Activated CD4-positive, alpha-beta memory T cell treated with anti-CD3 and anti-CD28 coated beads for 36 hours (primary cell): ENCODE measurements at regions of chr1 and their contacts with region 1.

Region 1: DNA sequence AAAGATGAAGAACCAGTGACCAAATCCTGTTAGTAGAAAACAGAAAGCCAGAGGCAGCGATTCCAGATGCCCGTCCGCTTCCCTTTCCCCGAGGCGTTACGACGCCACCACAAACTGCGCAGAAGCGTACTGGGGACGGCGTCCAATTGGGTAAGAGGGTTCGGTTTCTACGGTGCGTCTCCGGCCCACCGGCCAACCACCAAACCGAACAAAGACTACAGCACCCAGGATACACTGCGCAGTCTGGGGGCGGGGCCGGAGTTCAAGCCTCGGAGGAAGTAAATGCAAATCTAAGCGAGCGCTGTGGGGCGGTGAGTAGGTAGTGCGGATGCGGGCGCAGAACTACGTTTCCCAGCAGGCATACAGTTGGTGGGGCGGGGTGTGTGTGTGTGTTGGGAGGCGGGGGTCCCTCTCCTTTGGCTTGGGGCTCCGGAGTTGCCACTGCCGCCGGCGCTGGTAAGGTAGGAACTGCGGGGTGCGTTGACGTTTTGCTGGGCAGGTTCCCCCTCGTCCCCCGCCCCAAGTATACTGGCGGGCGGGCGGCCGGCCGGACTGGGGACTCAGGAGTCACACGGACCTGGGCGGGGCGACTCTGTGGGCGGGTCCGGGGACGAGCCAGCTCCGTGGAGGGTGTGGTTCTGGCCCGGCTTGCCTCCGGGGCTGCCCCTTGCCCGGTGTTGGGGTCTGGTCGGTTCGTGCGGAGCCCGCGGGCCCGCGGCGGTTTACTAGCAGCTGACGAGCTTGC is at the starts of genes SWT1 and TRMT1L:
- DNase-seq: peak; percentile 99
- H3K4me3 Mint-ChIP-seq: peak within 1 kb of the TSS; percentile 86
- H3K27ac Mint-ChIP-seq: peak within 1 kb of the TSS; percentile 90
- H3K4me1 Mint-ChIP-seq: peaks cover 53% of the 10 kb centered on the region
- H3K27me3 Mint-ChIP-seq: no peaks in the 10 kb centered on the region
- total RNA-seq, gene SWT1: 2.3 to 3.0 TPM
- total RNA-seq, gene TRMT1L: 28.6 to 34.4 TPM

Region 2: DNA sequence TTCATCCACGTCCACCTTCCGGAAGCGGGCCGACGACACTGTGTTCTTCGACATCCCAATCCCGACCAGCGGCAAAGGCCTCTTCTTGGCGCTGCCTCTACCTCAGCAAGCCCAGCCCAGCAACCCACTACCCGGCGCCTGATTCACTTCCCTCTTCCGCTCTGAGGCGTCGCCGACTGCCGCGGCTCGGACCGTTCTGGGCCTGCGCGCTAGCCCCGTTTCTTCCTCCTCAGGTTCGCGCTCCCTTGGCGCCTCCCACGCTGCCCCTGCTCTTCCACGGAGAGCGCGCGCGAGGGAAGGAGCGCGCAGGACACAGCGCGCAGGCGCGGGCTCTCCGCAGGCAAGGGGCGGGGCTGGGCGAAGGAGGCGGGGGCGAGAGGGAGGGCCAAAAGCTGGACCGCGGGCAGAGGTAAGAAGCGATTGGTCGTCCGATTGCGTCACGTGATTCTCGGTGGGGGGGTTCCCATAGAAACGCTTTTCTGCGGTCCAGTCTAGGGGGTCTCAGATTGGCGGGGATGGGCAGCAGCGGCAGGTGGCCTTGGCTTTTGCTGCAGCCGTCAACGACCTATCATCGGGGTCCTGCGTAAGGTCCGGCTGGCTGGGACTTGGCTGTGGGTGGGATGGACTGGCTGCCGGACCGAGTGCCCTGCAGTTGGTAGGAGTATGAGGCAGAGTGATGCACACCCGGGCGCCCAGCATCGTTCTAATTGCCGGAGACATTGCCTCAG is 1521.3 kb before region 1 on chr1 and contains the start of gene ARPC5:
- CTCF ChIA-PET with region 1: no interaction called
- POLR2A ChIA-PET with region 1: no interaction called
- intact Hi-C with region 1: loop called (anchors 10 kb)
- DNase-seq: peak; percentile 98
- H3K4me3 Mint-ChIP-seq: peak within 1 kb of the TSS; percentile 95
- H3K27ac Mint-ChIP-seq: peak within 1 kb of the TSS; percentile 99
- H3K4me1 Mint-ChIP-seq: peaks cover 33% of the 10 kb centered on the region
- H3K27me3 Mint-ChIP-seq: no peaks in the 10 kb centered on the region
- total RNA-seq, gene ARPC5: 158 to 161 TPM

Region 3: GRCh38 chr1:184881941-184882913 is 274.8 kb before region 1 on chr1:
- CTCF ChIA-PET with region 1: no interaction called
- POLR2A ChIA-PET with region 1: no interaction called
- intact Hi-C with region 1: loop called (anchors 5 kb)
- DNase-seq: peak; percentile 48
- H3K4me3 Mint-ChIP-seq: peak overlapping the region; percentile 13
- H3K27ac Mint-ChIP-seq: peak overlapping the region; percentile 92
- H3K4me1 Mint-ChIP-seq: peaks cover 33% of the 10 kb centered on the region
- H3K27me3 Mint-ChIP-seq: peaks cover 2% of the 10 kb centered on the region

Region 4: DNA sequence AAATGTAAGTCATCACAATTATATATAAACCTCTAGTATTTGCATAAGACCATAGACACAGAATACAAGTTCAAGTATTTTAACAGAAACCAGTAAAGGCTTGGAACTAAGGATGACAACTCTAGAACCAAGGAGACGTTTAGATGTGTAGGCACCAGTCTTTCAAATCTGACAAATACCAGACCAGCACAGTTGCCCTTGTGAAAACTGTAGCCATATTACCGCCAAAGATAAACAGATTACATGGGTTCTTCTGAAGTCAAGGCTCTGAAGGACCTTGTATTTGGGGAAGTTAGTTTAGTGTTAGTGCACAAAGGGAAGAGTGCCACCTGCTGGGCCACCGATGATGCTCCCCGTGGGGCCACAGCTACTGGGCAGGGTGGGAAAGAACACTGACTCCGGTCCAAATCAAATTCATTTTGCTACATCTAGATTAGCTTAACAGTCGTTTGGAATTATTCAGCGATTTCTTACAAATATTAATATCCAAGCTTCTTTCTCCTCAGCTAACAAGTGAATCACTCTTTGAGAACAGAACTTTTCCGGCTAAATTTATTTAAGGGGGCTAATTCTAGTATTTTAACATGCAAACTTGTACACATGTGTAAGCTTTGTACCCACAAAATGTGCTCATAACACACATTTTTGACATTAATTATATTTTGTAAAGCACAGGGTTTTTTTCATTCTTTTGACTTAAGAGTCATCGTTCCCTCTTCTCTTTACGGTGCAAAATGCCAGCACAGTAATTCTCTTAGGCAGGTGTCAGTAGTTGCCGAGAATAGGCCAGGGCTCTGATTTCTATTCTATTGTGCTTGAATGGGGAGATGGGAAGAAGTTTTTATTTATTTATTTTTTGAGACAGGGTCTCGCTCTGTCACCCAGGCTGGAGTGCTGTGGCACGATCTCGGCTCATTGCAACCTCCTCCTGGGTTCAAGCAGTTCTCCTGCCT is 174.7 kb before region 1 on chr1:
- CTCF ChIA-PET with region 1: no interaction called
- POLR2A ChIA-PET with region 1: no interaction called
- intact Hi-C with region 1: no loop called
- DNase-seq: peak; percentile 85
- H3K4me3 Mint-ChIP-seq: no peak overlapping the region
- H3K27ac Mint-ChIP-seq: no peak overlapping the region
- H3K4me1 Mint-ChIP-seq: no peaks in the 10 kb centered on the region
- H3K27me3 Mint-ChIP-seq: peaks cover 4% of the 10 kb centered on the region

Region 5: GRCh38 chr1:185044981-185045813 is 111.8 kb before region 1 on chr1 and contains the start of gene RNF2:
- CTCF ChIA-PET with region 1: interaction called, 4 read pairs
- POLR2A ChIA-PET with region 1: interaction called, 9 read pairs
- intact Hi-C with region 1: loop called (anchors 1 kb)
- DNase-seq: peak; percentile 85
- H3K4me3 Mint-ChIP-seq: peak within 1 kb of the TSS; percentile 90
- H3K27ac Mint-ChIP-seq: peak within 1 kb of the TSS; percentile 72
- H3K4me1 Mint-ChIP-seq: peaks cover 39% of the 10 kb centered on the region
- H3K27me3 Mint-ChIP-seq: no peaks in the 10 kb centered on the region
- total RNA-seq, gene RNF2: 20.7 to 21.2 TPM

Region 6: GRCh38 chr1:185144233-185144632 is 12.8 kb before region 1 on chr1:
- CTCF ChIA-PET with region 1: no interaction called
- POLR2A ChIA-PET with region 1: no interaction called
- intact Hi-C with region 1: no loop called
- DNase-seq: no peak
- H3K4me3 Mint-ChIP-seq: no peak overlapping the region
- H3K27ac Mint-ChIP-seq: no peak overlapping the region
- H3K4me1 Mint-ChIP-seq: no peaks in the 10 kb centered on the region
- H3K27me3 Mint-ChIP-seq: no peaks in the 10 kb centered on the region

Region 7: DNA sequence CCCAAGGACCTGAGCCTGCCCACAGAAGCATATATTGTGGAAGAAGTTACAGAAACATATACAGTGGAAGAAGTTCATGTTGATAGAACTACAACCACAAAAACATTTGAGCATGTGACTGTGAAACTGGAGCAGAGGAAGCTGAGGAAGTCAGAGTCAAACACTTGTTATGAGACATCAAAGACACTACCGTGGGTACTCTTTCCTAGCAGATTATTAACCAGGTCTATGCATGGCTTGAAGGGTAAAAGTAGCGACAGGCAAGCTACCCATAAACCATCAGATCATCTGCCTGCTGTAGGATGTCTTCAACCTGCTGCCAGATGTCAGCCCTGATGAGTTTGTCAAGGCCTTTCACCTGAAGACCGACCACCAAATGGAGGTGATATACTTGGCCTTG is 124.2 kb after region 1 on chr1:
- CTCF ChIA-PET with region 1: no interaction called
- POLR2A ChIA-PET with region 1: no interaction called
- intact Hi-C with region 1: loop called (anchors 1 kb)
- DNase-seq: peak; percentile 20
- H3K4me3 Mint-ChIP-seq: peak overlapping the region; percentile 28
- H3K27ac Mint-ChIP-seq: peak overlapping the region; percentile 88
- H3K4me1 Mint-ChIP-seq: peaks cover 57% of the 10 kb centered on the region
- H3K27me3 Mint-ChIP-seq: no peaks in the 10 kb centered on the region

Region 8: GRCh38 chr1:185636848-185637247 is 479.8 kb after region 1 on chr1:
- CTCF ChIA-PET with region 1: no interaction called
- POLR2A ChIA-PET with region 1: no interaction called
- intact Hi-C with region 1: loop called (anchors 2 kb)
- DNase-seq: peak; percentile 62
- H3K4me3 Mint-ChIP-seq: no peak overlapping the region
- H3K27ac Mint-ChIP-seq: peak overlapping the region; percentile 83
- H3K4me1 Mint-ChIP-seq: peaks cover 15% of the 10 kb centered on the region
- H3K27me3 Mint-ChIP-seq: peaks cover 3% of the 10 kb centered on the region

Region 9: DNA sequence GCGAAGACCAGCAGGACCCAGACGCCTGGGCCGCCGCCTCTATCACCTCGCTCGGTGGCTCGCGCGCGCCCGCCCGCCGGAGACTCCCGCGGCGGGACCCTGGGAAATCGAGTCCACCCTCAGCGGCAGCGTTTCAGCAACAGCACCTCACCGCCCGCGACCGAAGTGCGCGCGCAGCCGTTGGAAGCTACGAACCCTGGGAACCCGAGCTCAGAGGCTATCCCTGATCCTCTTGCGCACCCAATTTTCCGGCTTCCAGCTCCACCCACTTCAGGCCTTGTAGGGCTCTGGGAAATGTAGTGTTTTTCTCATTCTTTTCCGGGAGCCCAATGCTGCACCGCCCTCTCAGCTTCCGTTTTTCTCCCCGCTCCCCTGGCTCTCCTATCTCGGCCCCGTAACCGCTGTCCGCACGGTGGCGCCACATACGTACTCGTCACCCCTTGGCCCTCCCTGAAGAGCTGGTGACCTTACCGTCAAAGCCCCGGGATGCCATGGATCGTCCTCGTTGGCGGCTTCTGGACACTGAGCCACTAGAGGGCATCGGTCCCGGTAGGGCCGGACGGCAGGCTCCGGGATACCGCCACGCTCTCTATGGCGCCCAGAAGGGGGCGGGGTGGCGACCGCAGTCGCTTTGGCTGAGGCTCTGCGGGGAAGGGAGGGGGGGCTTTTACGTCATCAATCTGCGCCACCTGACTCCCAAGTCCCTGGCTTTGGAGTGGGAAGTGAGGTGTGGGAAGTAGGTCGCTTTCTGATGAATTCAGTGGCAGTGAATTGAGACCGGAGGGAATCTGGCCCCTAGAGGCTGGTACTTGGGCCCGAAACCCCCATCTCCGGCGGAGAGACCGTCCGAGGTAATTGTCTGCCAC is 1218.3 kb after region 1 on chr1 and contains the starts of genes ODR4 and TPR:
- CTCF ChIA-PET with region 1: no interaction called
- POLR2A ChIA-PET with region 1: no interaction called
- intact Hi-C with region 1: loop called (anchors 1 kb)
- DNase-seq: peak; percentile 98
- H3K4me3 Mint-ChIP-seq: peak within 1 kb of the TSS; percentile 93
- H3K27ac Mint-ChIP-seq: peak within 1 kb of the TSS; percentile 97
- H3K4me1 Mint-ChIP-seq: peaks cover 43% of the 10 kb centered on the region
- H3K27me3 Mint-ChIP-seq: no peaks in the 10 kb centered on the region
- total RNA-seq, gene ODR4: 11.5 to 12.0 TPM
- total RNA-seq, gene TPR: 130 to 131 TPM